Activated CD4-positive, alpha-beta T cell treated with anti-CD3 and anti-CD28 coated beads for 36 hours (primary cell): ENCODE measurements at regions of chr15 and their contacts with region 1.

Region 1: GRCh38 chr15:62841891-62842559 is 200.5 kb upstream of the TPM1 start:
- DNase-seq: no peak
- ATAC-seq: no peak
- H3K4me3 Mint-ChIP-seq: no peak overlapping the region
- H3K27ac Mint-ChIP-seq: no peak overlapping the region
- H3K4me1 Mint-ChIP-seq: no peaks in the 10 kb centered on the region
- H3K27me3 Mint-ChIP-seq: no peaks in the 10 kb centered on the region

Region 2: DNA sequence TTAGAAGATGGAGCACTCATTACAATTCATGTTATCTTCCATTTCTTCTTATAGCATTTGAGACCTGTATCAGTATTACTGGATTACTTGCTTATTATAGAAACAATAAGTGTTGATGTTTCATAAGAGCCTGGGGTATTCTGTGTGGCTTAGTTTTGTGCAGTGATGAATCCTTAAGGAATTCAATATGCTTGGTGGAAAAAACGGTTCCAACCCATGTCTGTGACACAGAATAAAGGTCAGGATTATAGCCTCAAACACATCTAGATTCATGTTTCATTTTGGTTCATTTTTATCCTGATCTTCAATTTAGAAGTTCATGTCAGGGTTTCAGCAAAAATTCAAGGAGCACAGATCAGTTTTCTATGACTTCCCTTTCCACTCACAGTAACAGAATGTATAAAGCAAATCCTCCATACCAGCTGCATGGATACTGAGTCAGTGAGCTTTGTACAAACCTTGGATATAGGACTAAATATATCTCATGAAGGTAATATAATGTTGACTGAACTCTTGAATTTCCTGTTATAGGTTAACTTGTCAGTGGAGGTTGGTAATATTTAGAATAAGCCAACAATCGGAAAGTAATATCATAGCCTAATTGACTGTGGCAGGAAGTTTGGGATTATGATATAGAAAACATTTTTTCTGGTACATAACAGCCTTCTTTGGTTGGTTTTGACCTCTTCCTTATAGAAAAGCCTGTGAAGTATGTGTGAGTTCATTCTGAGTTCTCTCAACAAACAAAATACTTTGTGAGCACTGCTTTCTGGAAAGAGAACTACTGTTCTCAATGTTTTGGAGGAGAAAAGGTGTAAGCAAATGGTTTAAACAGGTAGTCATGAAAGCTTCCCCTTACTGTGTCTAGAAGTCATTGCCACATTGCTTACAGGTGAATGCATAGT is 17.7 kb before region 1 on chr15:
- CTCF ChIA-PET with region 1: no interaction called
- POLR2A ChIA-PET with region 1: no interaction called
- intact Hi-C with region 1: no loop called
- DNase-seq: no peak
- ATAC-seq: no peak
- H3K4me3 Mint-ChIP-seq: no peak overlapping the region
- H3K27ac Mint-ChIP-seq: no peak overlapping the region
- H3K4me1 Mint-ChIP-seq: no peaks in the 10 kb centered on the region
- H3K27me3 Mint-ChIP-seq: peaks cover 4% of the 10 kb centered on the region

Region 3: DNA sequence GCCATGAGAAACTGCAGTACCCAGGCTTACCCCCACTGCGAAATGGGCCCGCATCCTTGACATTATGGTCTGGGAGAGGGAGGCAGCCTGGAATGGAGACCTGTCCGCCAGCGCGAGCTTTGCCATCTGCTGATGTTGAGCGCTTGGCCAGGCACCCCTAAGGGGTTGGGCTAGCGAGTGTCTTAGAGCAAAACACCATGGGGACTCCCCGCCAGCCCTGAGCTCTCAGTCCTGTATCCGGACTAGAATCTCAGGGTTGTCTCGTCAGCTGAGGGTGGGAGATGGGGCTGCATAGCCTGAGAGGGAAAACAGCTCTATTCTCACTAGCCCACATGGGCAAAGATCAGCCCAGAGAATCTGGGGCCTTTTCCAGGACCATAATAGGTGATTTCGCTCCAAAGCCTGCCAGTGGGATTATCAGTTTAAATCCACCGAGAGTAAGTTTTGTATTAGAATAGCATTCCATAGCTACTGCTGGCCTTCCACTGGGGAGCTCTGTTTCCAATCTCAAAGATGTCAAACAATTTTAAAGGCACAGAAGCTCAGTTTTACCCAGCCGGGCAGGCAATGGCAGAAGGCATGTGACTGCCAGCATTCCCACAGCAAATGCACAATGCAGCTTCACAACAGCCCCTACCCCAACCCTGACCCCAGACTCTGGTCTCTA is 33.1 kb after region 1 on chr15:
- CTCF ChIA-PET with region 1: no interaction called
- POLR2A ChIA-PET with region 1: no interaction called
- intact Hi-C with region 1: loop called in 1 of 2 experiments (anchors 1 kb)
- DNase-seq: no peak
- ATAC-seq: no peak
- H3K4me3 Mint-ChIP-seq: no peak overlapping the region
- H3K27ac Mint-ChIP-seq: no peak overlapping the region
- H3K4me1 Mint-ChIP-seq: peaks cover 5% of the 10 kb centered on the region
- H3K27me3 Mint-ChIP-seq: no peaks in the 10 kb centered on the region

Region 4: GRCh38 chr15:62958528-62959363 is 116.7 kb after region 1 on chr15:
- CTCF ChIA-PET with region 1: no interaction called
- POLR2A ChIA-PET with region 1: no interaction called
- intact Hi-C with region 1: no loop called
- DNase-seq: no peak
- ATAC-seq: no peak
- H3K4me3 Mint-ChIP-seq: no peak overlapping the region
- H3K27ac Mint-ChIP-seq: no peak overlapping the region
- H3K4me1 Mint-ChIP-seq: no peaks in the 10 kb centered on the region
- H3K27me3 Mint-ChIP-seq: peaks cover under 1% of the 10 kb centered on the region

Region 5: DNA sequence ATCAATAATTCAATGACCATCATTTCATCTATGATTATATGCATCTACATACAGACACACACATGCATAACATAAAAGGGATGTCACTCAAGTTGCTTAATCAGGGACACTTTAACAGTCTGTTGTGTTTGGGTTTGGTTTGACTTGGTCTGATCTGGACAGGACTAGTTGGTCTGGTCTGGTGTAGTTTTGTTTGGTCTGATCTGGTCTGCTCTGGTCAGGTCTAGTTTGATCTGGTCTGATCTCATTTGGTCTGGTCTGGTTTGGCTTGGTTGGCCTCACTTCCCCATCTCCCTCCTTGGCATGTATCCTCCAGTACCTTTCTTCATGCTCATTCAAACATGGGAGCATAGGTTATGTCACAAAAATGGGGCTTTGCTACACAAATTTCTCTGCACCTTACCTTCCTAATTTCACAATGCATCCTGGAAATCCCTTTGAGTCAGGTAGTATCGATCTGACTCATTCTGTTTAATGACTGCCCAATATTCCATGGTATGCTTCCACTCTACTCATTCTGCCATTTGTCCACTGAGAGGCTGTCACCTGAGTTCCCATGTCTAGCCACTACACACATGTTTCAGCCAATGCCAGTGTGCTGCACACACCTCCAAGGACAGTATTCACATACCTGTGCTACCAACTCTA is 127.5 kb after region 1 on chr15:
- CTCF ChIA-PET with region 1: no interaction called
- POLR2A ChIA-PET with region 1: no interaction called
- intact Hi-C with region 1: no loop called
- DNase-seq: no peak
- ATAC-seq: peak; percentile 12
- H3K4me3 Mint-ChIP-seq: no peak overlapping the region
- H3K27ac Mint-ChIP-seq: no peak overlapping the region
- H3K4me1 Mint-ChIP-seq: no peaks in the 10 kb centered on the region
- H3K27me3 Mint-ChIP-seq: peaks cover 6% of the 10 kb centered on the region